ENCODE measurements at regions of chr6 and their contacts with region 1.

Region 1: GRCh38 chr6:27146706-27147505 is 100.6 kb upstream of the PRSS16 start:
- DNase-seq: peak; percentile 100
- ATAC-seq: peak; percentile 90
- H3K4me3 ChIP-seq: peak overlapping the region; percentile 85
- H3K27ac ChIP-seq: peak overlapping the region; percentile 96
- H3K4me1 ChIP-seq: peaks cover 2% of the 10 kb centered on the region; the same call in 1 of the 2 replicates
- H3K27me3 ChIP-seq: no peaks in the 10 kb centered on the region
- CTCF ChIP-seq: no peak
- POLR2A ChIP-seq: peak; percentile 95
- RAD21 ChIP-seq: no peak

Region 2: GRCh38 chr6:26025894-26026832 is 1120.7 kb before region 1 on chr6:
- CTCF ChIA-PET with region 1: interaction called, 3 read pairs
- POLR2A ChIA-PET with region 1: interaction called, 3 read pairs
- dilution Hi-C with region 1: no loop called
- in situ Hi-C with region 1: no loop called
- intact Hi-C with region 1: loop called (anchors 5 kb)
- DNase-seq: peak; percentile 99
- ATAC-seq: peak; percentile 41
- H3K4me3 ChIP-seq: peak overlapping the region; percentile 68; the same call in 1 of the 2 replicates
- H3K27ac ChIP-seq: peak overlapping the region; percentile 59
- H3K4me1 ChIP-seq: peaks cover 4% of the 10 kb centered on the region
- H3K27me3 ChIP-seq: no peaks in the 10 kb centered on the region
- CTCF ChIP-seq: peak; percentile 96
- POLR2A ChIP-seq: 0 out of 2 replicates have a peak, but pooled peaks have one; percentile 38
- RAD21 ChIP-seq: peak; percentile 72

Region 3: GRCh38 chr6:26045065-26045927 is 1101.6 kb before region 1 on chr6:
- CTCF ChIA-PET with region 1: no interaction called
- POLR2A ChIA-PET with region 1: no interaction called
- dilution Hi-C with region 1: no loop called
- in situ Hi-C with region 1: no loop called
- intact Hi-C with region 1: loop called (anchors 5 kb)
- DNase-seq: peak; percentile 94
- ATAC-seq: peak; percentile 73
- H3K4me3 ChIP-seq: peak overlapping the region; percentile 63
- H3K27ac ChIP-seq: peak overlapping the region; percentile 51
- H3K4me1 ChIP-seq: no peaks in the 10 kb centered on the region; the same call in 1 of the 2 replicates
- H3K27me3 ChIP-seq: no peaks in the 10 kb centered on the region
- CTCF ChIP-seq: peak; percentile 21; the same call in 1 of the 2 replicates
- POLR2A ChIP-seq: peak; percentile 98
- RAD21 ChIP-seq: no peak

Region 4: GRCh38 chr6:26285143-26286134 is 861.5 kb before region 1 on chr6:
- CTCF ChIA-PET with region 1: no interaction called
- POLR2A ChIA-PET with region 1: interaction called, 5 read pairs
- dilution Hi-C with region 1: no loop called
- in situ Hi-C with region 1: loop called (anchors 25 kb)
- intact Hi-C with region 1: no loop called
- DNase-seq: peak; percentile 99
- ATAC-seq: peak; percentile 85
- H3K4me3 ChIP-seq: peak overlapping the region; percentile 59
- H3K27ac ChIP-seq: peak overlapping the region; percentile 81
- H3K4me1 ChIP-seq: peaks cover 2% of the 10 kb centered on the region
- H3K27me3 ChIP-seq: no peaks in the 10 kb centered on the region
- CTCF ChIP-seq: no peak
- POLR2A ChIP-seq: peak; percentile 94
- RAD21 ChIP-seq: no peak; the same call in 1 of the 2 replicates

Region 5: DNA sequence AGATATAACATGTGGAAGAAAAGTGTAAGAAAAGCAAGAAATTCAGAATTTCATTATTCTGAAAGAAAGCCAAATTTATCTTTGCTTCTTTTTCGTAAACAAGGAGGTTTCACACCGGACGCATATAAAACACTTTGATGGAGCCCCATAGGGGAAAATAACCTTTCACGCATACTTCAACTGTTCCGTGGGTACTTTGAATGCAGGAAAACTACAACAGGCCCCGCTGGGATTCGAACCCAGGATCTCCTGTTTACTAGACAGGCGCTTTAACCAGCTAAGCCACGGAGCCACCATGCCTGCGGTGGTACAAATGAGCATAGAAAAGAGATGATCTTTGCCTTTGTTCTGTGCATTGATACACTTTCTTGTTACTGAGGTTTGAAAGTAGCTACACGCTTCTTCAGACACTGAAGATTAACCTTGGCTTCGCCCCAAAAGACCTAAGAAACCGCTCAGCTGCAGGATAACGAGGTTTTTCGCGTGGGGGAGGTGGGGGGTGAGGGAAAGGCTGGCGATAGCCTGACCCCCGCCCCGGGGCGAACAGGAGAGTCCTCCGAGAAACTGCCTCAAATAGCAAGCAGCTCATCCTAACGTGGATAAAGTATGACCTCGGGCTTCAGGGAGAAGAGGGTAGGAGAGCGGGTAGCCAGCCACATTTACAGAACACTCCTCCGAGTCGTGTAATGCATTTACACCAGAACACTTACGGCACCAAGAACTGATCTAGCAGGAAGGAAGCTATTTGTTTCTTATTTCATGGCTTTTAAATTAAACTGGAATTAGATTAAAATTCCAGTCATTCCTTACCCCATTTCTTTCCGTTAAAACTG is 614.0 kb before region 1 on chr6:
- CTCF ChIA-PET with region 1: no interaction called
- POLR2A ChIA-PET with region 1: interaction called, 15 read pairs
- dilution Hi-C with region 1: no loop called
- in situ Hi-C with region 1: no loop called
- intact Hi-C with region 1: no loop called
- DNase-seq: peak; percentile 89
- ATAC-seq: peak; percentile 72
- H3K4me3 ChIP-seq: peak overlapping the region; percentile 81
- H3K27ac ChIP-seq: peak overlapping the region; percentile 80
- H3K4me1 ChIP-seq: peaks cover 2% of the 10 kb centered on the region; the same call in 1 of the 2 replicates
- H3K27me3 ChIP-seq: no peaks in the 10 kb centered on the region
- CTCF ChIP-seq: no peak
- POLR2A ChIP-seq: no peak
- RAD21 ChIP-seq: no peak

Region 6: GRCh38 chr6:27132532-27133280 is 14.2 kb before region 1 on chr6:
- CTCF ChIA-PET with region 1: interaction called, 8 read pairs
- POLR2A ChIA-PET with region 1: interaction called, 18 read pairs
- dilution Hi-C with region 1: no loop called
- in situ Hi-C with region 1: no loop called
- intact Hi-C with region 1: loop called (anchors 1 kb)
- DNase-seq: peak; percentile 100
- ATAC-seq: peak; percentile 89
- H3K4me3 ChIP-seq: peak overlapping the region; percentile 50
- H3K27ac ChIP-seq: peak overlapping the region; percentile 79
- H3K4me1 ChIP-seq: no peaks in the 10 kb centered on the region
- H3K27me3 ChIP-seq: no peaks in the 10 kb centered on the region
- CTCF ChIP-seq: no peak
- POLR2A ChIP-seq: peak; percentile 99
- RAD21 ChIP-seq: no peak

Region 7: DNA sequence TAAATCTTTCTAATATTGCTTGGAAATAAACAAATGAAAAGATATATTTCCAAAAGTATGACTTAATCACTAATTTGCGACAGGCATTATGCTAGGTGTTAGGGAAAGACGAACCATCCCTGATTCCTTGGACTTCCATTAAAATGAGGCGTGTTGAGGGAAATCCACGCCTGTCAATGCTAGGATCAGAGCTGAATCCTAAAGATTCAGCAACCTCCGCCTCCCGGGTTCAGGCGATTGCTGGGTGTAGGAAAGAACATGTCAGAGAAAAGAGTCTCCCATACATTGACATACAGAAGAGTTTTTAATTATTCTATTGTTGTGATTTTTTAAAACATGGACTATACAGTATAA is 83.8 kb after region 1 on chr6:
- CTCF ChIA-PET with region 1: no interaction called
- POLR2A ChIA-PET with region 1: no interaction called
- dilution Hi-C with region 1: no loop called
- in situ Hi-C with region 1: no loop called
- intact Hi-C with region 1: no loop called
- DNase-seq: no peak
- ATAC-seq: no peak
- H3K4me3 ChIP-seq: no peak overlapping the region
- H3K27ac ChIP-seq: no peak overlapping the region
- H3K4me1 ChIP-seq: no peaks in the 10 kb centered on the region
- H3K27me3 ChIP-seq: no peaks in the 10 kb centered on the region
- CTCF ChIP-seq: no peak
- POLR2A ChIP-seq: no peak
- RAD21 ChIP-seq: no peak

Region 8: GRCh38 chr6:27809939-27810767 is 663.2 kb after region 1 on chr6:
- CTCF ChIA-PET with region 1: no interaction called
- POLR2A ChIA-PET with region 1: interaction called, 9 read pairs
- dilution Hi-C with region 1: no loop called
- in situ Hi-C with region 1: loop called (anchors 10 kb)
- intact Hi-C with region 1: loop called (anchors 5 kb)
- DNase-seq: peak; percentile 98
- ATAC-seq: peak; percentile 52
- H3K4me3 ChIP-seq: peak overlapping the region; percentile 58
- H3K27ac ChIP-seq: peak overlapping the region; percentile 87
- H3K4me1 ChIP-seq: peaks cover 3% of the 10 kb centered on the region
- H3K27me3 ChIP-seq: no peaks in the 10 kb centered on the region
- CTCF ChIP-seq: 0 out of 2 replicates have a peak, but pooled peaks have one; percentile 16
- POLR2A ChIP-seq: peak; percentile 99
- RAD21 ChIP-seq: no peak